H1 (cell line): ENCODE measurements at regions of chr1 and their contacts with region 1.

Region 1: DNA sequence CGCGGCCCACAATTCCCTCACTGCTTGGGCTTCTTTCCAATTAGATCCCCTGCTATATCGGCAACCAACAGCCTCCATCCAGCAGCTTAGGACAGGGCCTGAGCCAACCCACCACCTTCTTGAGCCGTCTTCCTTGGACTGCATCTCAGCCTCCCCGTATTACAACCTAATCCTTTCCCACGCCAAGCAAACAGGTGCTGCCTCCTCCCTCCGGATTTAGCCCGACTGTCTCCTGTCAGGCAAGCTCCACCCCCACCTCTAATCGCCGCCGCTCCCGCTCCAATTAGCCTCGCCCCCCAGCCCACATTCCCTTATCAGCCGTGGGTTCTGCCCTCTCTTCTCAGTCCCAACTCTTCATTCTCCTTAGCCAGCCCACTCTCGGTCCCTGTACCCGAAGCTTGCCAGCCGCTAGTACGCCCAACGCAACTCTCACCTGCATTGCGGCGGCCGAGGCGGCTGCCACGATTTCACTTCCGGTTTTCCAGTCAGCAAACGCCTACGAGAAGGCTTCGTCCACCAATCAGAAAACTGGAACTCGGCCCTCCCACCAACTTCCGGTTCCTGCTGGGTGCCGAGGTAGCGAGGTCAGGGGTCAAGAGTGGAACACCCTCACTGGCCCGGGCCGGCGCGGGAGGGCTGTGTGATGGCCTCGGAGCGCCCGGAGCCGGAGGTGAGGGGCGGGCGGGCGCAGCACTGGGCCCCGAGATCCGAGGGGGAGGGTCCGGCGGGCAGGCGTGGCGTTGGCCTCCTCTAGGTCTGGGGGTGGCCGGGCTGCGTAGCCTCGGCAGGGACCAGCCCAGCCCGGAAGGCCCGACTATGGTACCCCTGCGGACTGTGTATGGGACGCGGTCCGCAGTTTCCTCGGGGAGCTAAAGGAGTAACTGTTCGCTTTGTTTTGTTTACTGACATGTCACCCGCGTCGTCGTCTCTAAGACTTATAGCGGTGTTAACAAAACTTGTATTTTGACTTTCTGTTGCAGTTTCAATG is at the starts of genes MED8 and SZT2:
- DNase-seq: peak; percentile 93 to 96
- H3K4me3 ChIP-seq: peak within 1 kb of the TSS; percentile 78 to 92 (median 85)
- H3K27ac ChIP-seq: peak within 1 kb of the TSS; percentile 5; the same call in 1 of the 2 replicates
- H3K4me1 ChIP-seq: peaks cover 0 to 8% (median 4%) of the 10 kb centered on the region in 4 experiments; a peak in 4 of 7 replicates
- H3K27me3 ChIP-seq: no peaks in the 10 kb centered on the region
- CTCF ChIP-seq: no peak
- EP300 ChIP-seq: no peak
- POLR2A ChIP-seq: peak in 1 of 2 experiments; percentile 49; a peak in 1 of 3 replicates
- RAD21 ChIP-seq: no peak; a peak in 1 of 4 replicates
- total RNA-seq, gene MED8: 19.5 and 20.6 TPM in 2 replicates
- total RNA-seq, gene SZT2: 12.9 and 13.8 TPM in 2 replicates

Region 2: DNA sequence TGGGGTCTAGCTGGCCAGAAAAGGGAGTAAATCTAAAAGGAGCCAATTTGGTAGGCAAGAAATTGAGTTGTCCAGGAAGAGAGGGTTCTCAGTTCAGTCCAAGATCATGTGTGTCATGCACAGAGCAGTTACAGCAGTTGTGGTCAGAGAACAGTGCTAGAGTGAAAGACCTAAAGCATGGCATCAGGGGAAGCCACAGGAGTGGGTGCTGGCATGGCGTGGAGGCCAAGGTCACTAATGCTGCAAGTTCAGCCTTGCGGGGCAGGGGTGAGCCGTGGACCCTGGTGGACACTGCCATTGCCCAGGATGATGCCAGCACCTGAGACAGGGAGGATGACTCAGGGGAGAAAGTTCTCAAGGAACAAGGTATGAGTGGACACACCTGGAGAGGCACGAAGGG is 136.4 kb before region 1 on chr1:
- CTCF ChIA-PET with region 1: no interaction called
- POLR2A ChIA-PET with region 1: no interaction called
- DNase-seq: no peak
- H3K4me3 ChIP-seq: no peak overlapping the region
- H3K27ac ChIP-seq: no peak overlapping the region
- H3K4me1 ChIP-seq: no peaks in the 10 kb centered on the region
- H3K27me3 ChIP-seq: no peaks in the 10 kb centered on the region
- CTCF ChIP-seq: no peak
- EP300 ChIP-seq: no peak
- POLR2A ChIP-seq: no peak
- RAD21 ChIP-seq: no peak

Region 3: GRCh38 chr1:43367904-43368645 is 21.5 kb before region 1 on chr1 and contains the start of gene ELOVL1:
- CTCF ChIA-PET with region 1: interaction called, 3 read pairs
- POLR2A ChIA-PET with region 1: interaction called, 33 read pairs
- DNase-seq: peak in 1 of 2 experiments; percentile 92
- H3K4me3 ChIP-seq: peak within 1 kb of the TSS; percentile 33 to 68 (median 58)
- H3K27ac ChIP-seq: peak within 1 kb of the TSS; percentile 79; the same call in 1 of the 2 replicates
- H3K4me1 ChIP-seq: peaks cover 4 to 21% (median 13%) of the 10 kb centered on the region in 4 experiments
- H3K27me3 ChIP-seq: no peaks in the 10 kb centered on the region
- CTCF ChIP-seq: peak in 2 of 3 experiments; percentile 4 to 9; a peak in 2 of 4 replicates
- EP300 ChIP-seq: no peak
- POLR2A ChIP-seq: peak; percentile 14 to 72
- RAD21 ChIP-seq: peak; percentile 1 to 19; a peak in 1 of 4 replicates
- total RNA-seq, gene ELOVL1: 28.5 and 29.1 TPM in 2 replicates

Region 4: DNA sequence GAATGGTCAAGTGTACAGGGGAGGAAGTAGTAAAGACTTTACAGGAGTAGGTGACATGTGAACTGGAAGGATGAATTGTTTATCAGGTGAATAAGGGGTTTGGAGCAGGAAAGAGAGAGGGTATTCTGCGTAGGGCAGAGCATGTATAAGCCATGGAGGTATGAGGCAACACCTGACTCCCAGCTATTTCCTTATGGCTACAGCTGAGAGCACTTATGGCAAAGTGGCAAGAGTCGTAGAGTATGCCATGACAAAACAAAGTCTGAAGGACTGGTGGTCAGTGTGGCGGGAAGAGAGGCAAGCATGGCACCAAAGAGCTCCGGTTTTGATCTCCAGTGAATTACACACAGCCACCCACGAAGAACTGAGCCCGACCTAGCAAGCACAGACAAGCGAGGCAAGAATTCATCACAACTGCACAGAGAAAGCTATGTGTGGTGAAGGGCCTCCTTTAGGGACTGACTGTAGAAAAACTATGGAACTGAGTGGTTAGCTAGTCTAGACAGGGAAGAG is 12.8 kb before region 1 on chr1:
- CTCF ChIA-PET with region 1: interaction called, 3 read pairs
- POLR2A ChIA-PET with region 1: interaction called, 38 read pairs
- DNase-seq: no peak
- H3K4me3 ChIP-seq: no peak overlapping the region
- H3K27ac ChIP-seq: no peak overlapping the region
- H3K4me1 ChIP-seq: no peaks in the 10 kb centered on the region
- H3K27me3 ChIP-seq: no peaks in the 10 kb centered on the region
- CTCF ChIP-seq: no peak
- EP300 ChIP-seq: no peak
- POLR2A ChIP-seq: no peak
- RAD21 ChIP-seq: no peak